BJ (cell line): ENCODE measurements at regions of chr5 and their contacts with region 1.

Region 1: GRCh38 chr5:141564216-141564692 is 54.5 kb downstream of the DIAPH1 start:
- DNase-seq: peak; percentile 73
- H3K4me3 ChIP-seq: no peak overlapping the region
- H3K27me3 ChIP-seq: no peaks in the 10 kb centered on the region
- CTCF ChIP-seq: peak; percentile 79

Region 2: GRCh38 chr5:141223112-141223783 is 341.0 kb before region 1 on chr5 and contains the start of gene PCDHB14:
- CTCF ChIA-PET with region 1: interaction called, 12 read pairs
- POLR2A ChIA-PET with region 1: no interaction called
- DNase-seq: no peak
- H3K4me3 ChIP-seq: peak within 1 kb of the TSS; percentile 27
- H3K27me3 ChIP-seq: no peaks in the 10 kb centered on the region
- CTCF ChIP-seq: 0 out of 2 replicates have a peak, but pooled peaks have one; percentile 21
- polyA plus RNA-seq, gene PCDHB14: 0.42 and 0.47 TPM in 2 replicates

Region 3: DNA sequence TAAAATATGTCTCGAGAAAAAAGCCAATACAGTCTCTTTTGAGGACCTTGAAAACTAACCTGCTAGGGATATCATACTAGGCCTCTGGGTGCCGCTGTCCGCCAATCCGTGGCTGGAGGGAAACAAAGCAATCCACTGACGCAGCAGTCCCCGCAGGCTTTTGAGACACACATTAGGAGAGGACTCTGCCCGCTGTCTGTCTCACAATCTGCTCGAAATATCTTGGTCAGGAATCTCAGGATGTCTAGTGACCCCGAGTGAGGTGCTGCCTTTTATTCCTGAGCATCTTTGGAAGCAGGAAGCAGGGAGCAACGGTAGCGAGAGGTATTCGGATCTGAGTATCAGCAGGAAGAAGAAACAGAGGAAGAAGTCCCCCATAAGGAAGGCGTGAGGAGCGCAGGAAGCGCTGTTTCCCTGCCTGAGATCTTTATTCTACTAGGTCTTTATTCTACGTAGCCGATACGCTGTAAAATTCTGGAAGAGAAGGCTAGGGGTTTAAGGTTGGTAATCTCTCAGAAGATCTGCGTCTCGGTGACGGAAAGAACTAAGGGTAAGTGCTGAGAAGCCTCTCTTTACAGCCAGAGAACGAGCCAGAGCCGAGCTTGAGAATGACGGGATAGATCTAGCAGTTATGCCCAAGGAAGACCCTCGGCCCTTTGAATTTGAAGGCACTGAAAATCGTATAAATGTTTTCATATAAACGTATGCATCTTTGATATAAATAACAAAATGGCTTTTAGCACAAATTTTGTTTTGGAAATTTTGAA is 238.0 kb before region 1 on chr5:
- CTCF ChIA-PET with region 1: interaction called, 85 read pairs
- POLR2A ChIA-PET with region 1: no interaction called
- DNase-seq: no peak
- H3K4me3 ChIP-seq: peak overlapping the region; percentile 29
- H3K27me3 ChIP-seq: peaks cover 5% of the 10 kb centered on the region; the same call in 1 of the 2 replicates
- CTCF ChIP-seq: peak; percentile 79

Region 4: DNA sequence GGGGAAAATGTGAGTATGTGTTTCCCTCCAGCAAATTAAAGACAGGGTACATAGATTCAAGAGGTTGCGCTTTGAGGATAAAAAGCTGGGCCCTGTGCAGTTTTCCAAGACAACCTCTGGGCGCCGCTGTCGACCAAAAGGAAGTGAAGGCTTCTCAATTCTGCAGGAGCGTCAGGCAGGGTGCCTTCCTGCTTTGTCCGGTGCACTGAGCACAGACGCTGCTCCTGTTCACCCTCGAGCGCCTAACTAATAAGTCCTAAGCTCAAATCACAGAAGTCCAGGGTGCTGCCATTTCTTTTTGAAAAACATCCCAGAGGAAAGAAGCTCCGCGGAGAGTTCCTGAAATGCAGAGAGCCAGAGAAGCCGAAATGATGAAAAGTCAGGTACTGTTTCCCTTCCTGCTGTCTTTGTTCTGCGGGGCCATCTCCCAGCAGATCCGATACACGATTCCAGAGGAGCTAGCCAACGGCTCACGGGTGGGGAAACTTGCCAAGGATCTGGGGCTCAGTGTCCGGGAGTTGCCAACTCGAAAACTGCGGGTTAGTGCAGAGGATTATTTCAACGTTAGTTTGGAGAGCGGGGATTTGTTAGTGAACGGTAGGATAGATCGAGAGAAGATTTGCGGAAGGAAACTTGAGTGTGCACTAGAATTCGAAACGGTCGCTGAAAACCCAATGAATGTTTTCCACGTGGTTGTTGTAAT is 214.2 kb before region 1 on chr5 and contains the start of gene PCDHGB1:
- CTCF ChIA-PET with region 1: interaction called, 20 read pairs
- POLR2A ChIA-PET with region 1: no interaction called
- DNase-seq: no peak
- H3K4me3 ChIP-seq: peak within 1 kb of the TSS; percentile 32
- H3K27me3 ChIP-seq: no peaks in the 10 kb centered on the region
- CTCF ChIP-seq: peak; percentile 76
- polyA plus RNA-seq, gene PCDHGB1: 2.0 and 2.2 TPM in 2 replicates

Region 5: GRCh38 chr5:141369994-141370848 is 194.0 kb before region 1 on chr5 and contains the start of gene PCDHGB3:
- CTCF ChIA-PET with region 1: interaction called, 18 read pairs
- POLR2A ChIA-PET with region 1: interaction called, 3 read pairs
- DNase-seq: no peak
- H3K4me3 ChIP-seq: peak within 1 kb of the TSS; percentile 24
- H3K27me3 ChIP-seq: no peaks in the 10 kb centered on the region; the same call in none of the 2 replicates
- CTCF ChIP-seq: peak; percentile 61
- polyA plus RNA-seq, gene PCDHGB3: 2.7 and 3.0 TPM in 2 replicates

Region 6: GRCh38 chr5:141402553-141403260 is 161.5 kb before region 1 on chr5 and contains the start of gene PCDHGA9:
- CTCF ChIA-PET with region 1: interaction called, 28 read pairs
- POLR2A ChIA-PET with region 1: no interaction called
- DNase-seq: no peak
- H3K4me3 ChIP-seq: no peak within 1 kb of the TSS
- H3K27me3 ChIP-seq: no peaks in the 10 kb centered on the region
- CTCF ChIP-seq: peak; percentile 35; the same call in 1 of the 2 replicates
- polyA plus RNA-seq, gene PCDHGA9: 0.97 and 1.2 TPM in 2 replicates

Region 7: GRCh38 chr5:141420855-141421496 is 143.3 kb before region 1 on chr5 and contains the start of gene PCDHGA11:
- CTCF ChIA-PET with region 1: interaction called, 112 read pairs
- POLR2A ChIA-PET with region 1: no interaction called
- DNase-seq: no peak
- H3K4me3 ChIP-seq: peak within 1 kb of the TSS; percentile 47
- H3K27me3 ChIP-seq: no peaks in the 10 kb centered on the region
- CTCF ChIP-seq: peak; percentile 58
- polyA plus RNA-seq, gene PCDHGA11: 5.4 and 7.4 TPM in 2 replicates

Region 8: GRCh38 chr5:141677415-141677814 is 113.2 kb after region 1 on chr5:
- CTCF ChIA-PET with region 1: no interaction called
- POLR2A ChIA-PET with region 1: no interaction called
- DNase-seq: no peak
- H3K4me3 ChIP-seq: no peak overlapping the region
- H3K27me3 ChIP-seq: no peaks in the 10 kb centered on the region
- CTCF ChIP-seq: peak; percentile 23; the same call in 1 of the 2 replicates